MCF 10A (cell line): ENCODE measurements at regions of chr15 and their contacts with region 1.

Region 1: DNA sequence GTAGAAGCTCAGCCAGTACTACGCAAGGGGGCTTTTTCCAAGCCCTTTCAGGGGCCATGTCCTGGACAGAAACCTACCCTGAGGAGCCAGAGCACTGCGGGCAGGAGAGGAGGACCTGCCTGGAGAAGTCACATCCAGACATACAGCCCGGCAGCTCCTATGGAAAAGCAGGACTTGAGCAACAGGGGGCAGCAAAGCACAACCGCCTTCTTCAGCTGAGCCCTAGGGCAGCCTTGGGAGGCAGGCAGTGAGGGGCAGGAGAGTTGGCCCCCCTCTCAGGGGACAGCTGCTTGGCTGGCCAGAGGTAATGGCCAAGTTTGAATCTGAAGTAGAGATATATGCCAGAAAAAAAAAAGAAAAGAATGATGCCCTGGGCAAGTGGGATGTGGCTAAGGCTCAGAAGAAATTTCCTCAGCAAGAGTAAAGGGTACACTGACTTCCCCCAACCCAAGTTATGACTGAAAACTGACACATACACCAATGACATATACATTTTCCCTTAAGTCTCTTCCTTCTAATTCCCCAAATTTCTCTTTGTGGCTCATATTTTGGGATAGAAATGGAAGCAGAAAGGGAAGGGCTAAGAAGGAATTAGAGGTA is 56.9 kb downstream of the CYP19A1 start:
- DNase-seq: peak; percentile 69
- H3K4me3 Mint-ChIP-seq: no peak overlapping the region
- H3K27ac Mint-ChIP-seq: no peak overlapping the region
- H3K4me1 Mint-ChIP-seq: peaks cover 9% of the 10 kb centered on the region
- H3K27me3 Mint-ChIP-seq: peaks cover 17% of the 10 kb centered on the region
- CTCF ChIP-seq: peak; percentile 47

Region 2: DNA sequence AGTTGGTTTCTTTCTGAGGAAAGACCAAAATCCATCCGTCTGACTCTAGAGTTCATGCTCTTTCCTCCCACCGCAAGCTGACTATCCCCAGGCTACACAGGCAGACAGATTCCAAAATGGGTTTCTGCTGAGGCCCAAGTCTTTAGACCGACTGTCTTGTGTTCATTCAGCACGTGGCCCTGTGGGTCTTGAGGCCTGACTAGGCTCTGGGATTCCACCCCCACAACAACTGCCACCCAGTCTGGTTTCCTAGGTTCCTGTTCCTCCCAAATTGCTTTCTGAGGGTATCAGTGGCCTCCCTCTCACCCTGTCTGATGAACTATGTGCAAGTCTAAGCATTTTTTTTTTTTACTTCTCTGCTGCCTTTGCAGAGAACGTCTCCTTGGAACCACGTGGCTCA is 10.8 kb before region 1 on chr15:
- CTCF ChIA-PET with region 1: interaction called, 12 read pairs
- POLR2A ChIA-PET with region 1: no interaction called
- intact Hi-C with region 1: no loop called
- DNase-seq: no peak
- H3K4me3 Mint-ChIP-seq: no peak overlapping the region
- H3K27ac Mint-ChIP-seq: no peak overlapping the region
- H3K4me1 Mint-ChIP-seq: no peaks in the 10 kb centered on the region
- H3K27me3 Mint-ChIP-seq: no peaks in the 10 kb centered on the region
- CTCF ChIP-seq: no peak

Region 3: GRCh38 chr15:51322621-51323296 is 41.3 kb after region 1 on chr15:
- CTCF ChIA-PET with region 1: no interaction called
- POLR2A ChIA-PET with region 1: no interaction called
- intact Hi-C with region 1: no loop called
- DNase-seq: peak; percentile 27
- H3K4me3 Mint-ChIP-seq: no peak overlapping the region
- H3K27ac Mint-ChIP-seq: no peak overlapping the region
- H3K4me1 Mint-ChIP-seq: no peaks in the 10 kb centered on the region
- H3K27me3 Mint-ChIP-seq: no peaks in the 10 kb centered on the region
- CTCF ChIP-seq: no peak

Region 4: GRCh38 chr15:51348688-51349087 is 67.2 kb after region 1 on chr15:
- CTCF ChIA-PET with region 1: no interaction called
- POLR2A ChIA-PET with region 1: no interaction called
- intact Hi-C with region 1: no loop called
- DNase-seq: no peak
- H3K4me3 Mint-ChIP-seq: no peak overlapping the region
- H3K27ac Mint-ChIP-seq: no peak overlapping the region
- H3K4me1 Mint-ChIP-seq: no peaks in the 10 kb centered on the region
- H3K27me3 Mint-ChIP-seq: no peaks in the 10 kb centered on the region
- CTCF ChIP-seq: no peak

Region 5: GRCh38 chr15:51499379-51499976 is 218.0 kb after region 1 on chr15:
- CTCF ChIA-PET with region 1: interaction called, 3 read pairs
- POLR2A ChIA-PET with region 1: no interaction called
- intact Hi-C with region 1: loop called (anchors 10 kb)
- DNase-seq: peak; percentile 54
- H3K4me3 Mint-ChIP-seq: no peak overlapping the region
- H3K27ac Mint-ChIP-seq: no peak overlapping the region
- H3K4me1 Mint-ChIP-seq: no peaks in the 10 kb centered on the region
- H3K27me3 Mint-ChIP-seq: no peaks in the 10 kb centered on the region
- CTCF ChIP-seq: peak; percentile 59